PC-3 (cell line): ENCODE measurements at regions of chr21 and their contacts with region 1.

Region 1: GRCh38 chr21:41431788-41432548 is 5.9 kb downstream of the MX1 start:
- DNase-seq: no peak
- ATAC-seq: no peak
- H3K4me3 ChIP-seq: no peak overlapping the region
- H3K27ac ChIP-seq: no peak overlapping the region
- H3K4me1 ChIP-seq: no peaks in the 10 kb centered on the region
- H3K27me3 ChIP-seq: no peaks in the 10 kb centered on the region
- CTCF ChIP-seq: no peak

Region 2: DNA sequence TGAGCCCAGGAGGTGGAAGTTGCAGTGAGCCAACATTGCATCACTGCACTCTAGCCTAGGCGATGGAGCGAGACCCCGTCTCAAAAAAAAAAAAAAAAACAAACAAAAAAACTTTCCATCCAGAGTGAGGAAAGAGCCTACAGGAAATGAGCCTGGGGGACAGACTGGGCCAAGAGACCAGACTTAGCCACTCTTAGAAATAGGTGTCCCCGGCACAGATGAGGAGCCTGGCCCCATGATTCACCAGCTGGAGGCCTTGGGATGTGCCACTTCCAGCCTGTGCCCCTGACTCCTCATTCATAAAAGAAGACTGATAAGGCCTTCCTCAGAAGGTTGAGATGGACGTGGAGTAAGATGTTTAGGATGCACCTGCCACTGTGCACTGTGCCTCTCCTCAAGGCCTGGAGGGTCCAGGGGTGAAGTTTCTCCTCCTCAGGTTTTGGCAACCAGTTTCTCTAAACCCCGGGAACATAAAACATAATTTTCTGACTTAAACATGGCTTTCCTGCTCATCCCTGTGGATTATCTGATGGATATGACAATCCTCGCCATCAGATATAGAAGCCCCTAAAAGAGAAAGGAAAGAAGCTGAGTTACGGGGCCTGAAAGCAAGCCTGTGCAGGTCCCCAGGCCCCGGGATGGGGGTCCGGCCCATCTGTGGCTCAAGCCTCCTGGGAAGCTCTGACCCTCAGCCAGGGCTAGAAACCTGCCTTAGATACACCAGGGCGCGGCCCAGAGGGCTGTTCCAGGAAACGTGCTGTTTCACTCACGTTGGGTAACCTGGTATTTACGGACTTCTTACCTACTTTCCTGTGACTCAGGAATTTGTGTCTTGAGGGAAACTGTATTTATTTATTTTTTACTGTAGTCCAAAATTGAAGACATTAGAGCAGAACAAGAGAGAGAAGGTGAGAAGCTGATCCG is 20.0 kb after region 1 on chr21:
- CTCF ChIA-PET with region 1: no interaction called
- POLR2A ChIA-PET with region 1: no interaction called
- intact Hi-C with region 1: loop called (anchors 2 kb)
- DNase-seq: peak; percentile 80
- ATAC-seq: peak; percentile 97
- H3K4me3 ChIP-seq: no peak overlapping the region
- H3K27ac ChIP-seq: peak overlapping the region; percentile 43
- H3K4me1 ChIP-seq: peaks cover 14% of the 10 kb centered on the region
- H3K27me3 ChIP-seq: no peaks in the 10 kb centered on the region
- CTCF ChIP-seq: no peak